GM12878 (cell line): ENCODE measurements at regions of chr2 and their contacts with region 1.

Region 1: GRCh38 chr2:54673501-54673998 is 49.9 kb upstream of the EML6 start:
- DNase-seq: no peak
- ATAC-seq: peak; percentile 76
- H3K4me3 ChIP-seq: no peak overlapping the region
- H3K27ac ChIP-seq: peak overlapping the region; percentile 70
- H3K4me1 ChIP-seq: peaks cover 20% of the 10 kb centered on the region
- H3K27me3 ChIP-seq: no peaks in the 10 kb centered on the region
- CTCF ChIP-seq: no peak
- EP300 ChIP-seq: no peak
- POLR2A ChIP-seq: no peak
- RAD21 ChIP-seq: no peak

Region 2: GRCh38 chr2:54657664-54658083 is 15.9 kb before region 1 on chr2:
- CTCF ChIA-PET with region 1: interaction called, 5 read pairs
- POLR2A ChIA-PET with region 1: no interaction called
- RAD21 ChIA-PET with region 1: interaction called, 5 read pairs
- SMC1A ChIA-PET with region 1: interaction called, 11 read pairs
- in situ Hi-C with region 1: no loop called
- intact Hi-C with region 1: no loop called
- DNase-seq: no peak
- ATAC-seq: peak; percentile 88
- H3K4me3 ChIP-seq: no peak overlapping the region
- H3K27ac ChIP-seq: no peak overlapping the region
- H3K4me1 ChIP-seq: no peaks in the 10 kb centered on the region
- H3K27me3 ChIP-seq: no peaks in the 10 kb centered on the region
- CTCF ChIP-seq: peak; percentile 50 to 63 (median 60); a peak in 5 of 6 replicates
- EP300 ChIP-seq: no peak
- POLR2A ChIP-seq: peak; percentile 56; the same call in 1 of the 2 replicates
- RAD21 ChIP-seq: peak; percentile 51; the same call in 1 of the 2 replicates